Activated B cell treated with CpG ODN at 0.5 μM for 24 hours (primary cell): ENCODE measurements at regions of chr11 and their contacts with region 1.

Region 1: GRCh38 chr11:34357701-34358257 is at the start of gene ABTB2:
- DNase-seq: peak; percentile 94
- ATAC-seq: peak; percentile 87
- H3K4me3 Mint-ChIP-seq: peak within 1 kb of the TSS; percentile 88
- H3K27ac Mint-ChIP-seq: peak within 1 kb of the TSS; percentile 86
- H3K4me1 Mint-ChIP-seq: peaks cover 39% of the 10 kb centered on the region
- H3K27me3 Mint-ChIP-seq: peaks cover 17% of the 10 kb centered on the region
- CTCF ChIP-seq: no peak
- total RNA-seq, gene ABTB2: 68.6 and 73.0 TPM in 2 replicates

Region 2: GRCh38 chr11:33857933-33858371 is 499.8 kb before region 1 on chr11:
- CTCF ChIA-PET with region 1: interaction called, 3 read pairs
- POLR2A ChIA-PET with region 1: no interaction called
- intact Hi-C with region 1: loop called (anchors 1 kb)
- DNase-seq: peak; percentile 65
- ATAC-seq: peak; percentile 98
- H3K4me3 Mint-ChIP-seq: no peak overlapping the region
- H3K27ac Mint-ChIP-seq: no peak overlapping the region
- H3K4me1 Mint-ChIP-seq: peaks cover 8% of the 10 kb centered on the region
- H3K27me3 Mint-ChIP-seq: no peaks in the 10 kb centered on the region
- CTCF ChIP-seq: peak; percentile 39

Region 3: DNA sequence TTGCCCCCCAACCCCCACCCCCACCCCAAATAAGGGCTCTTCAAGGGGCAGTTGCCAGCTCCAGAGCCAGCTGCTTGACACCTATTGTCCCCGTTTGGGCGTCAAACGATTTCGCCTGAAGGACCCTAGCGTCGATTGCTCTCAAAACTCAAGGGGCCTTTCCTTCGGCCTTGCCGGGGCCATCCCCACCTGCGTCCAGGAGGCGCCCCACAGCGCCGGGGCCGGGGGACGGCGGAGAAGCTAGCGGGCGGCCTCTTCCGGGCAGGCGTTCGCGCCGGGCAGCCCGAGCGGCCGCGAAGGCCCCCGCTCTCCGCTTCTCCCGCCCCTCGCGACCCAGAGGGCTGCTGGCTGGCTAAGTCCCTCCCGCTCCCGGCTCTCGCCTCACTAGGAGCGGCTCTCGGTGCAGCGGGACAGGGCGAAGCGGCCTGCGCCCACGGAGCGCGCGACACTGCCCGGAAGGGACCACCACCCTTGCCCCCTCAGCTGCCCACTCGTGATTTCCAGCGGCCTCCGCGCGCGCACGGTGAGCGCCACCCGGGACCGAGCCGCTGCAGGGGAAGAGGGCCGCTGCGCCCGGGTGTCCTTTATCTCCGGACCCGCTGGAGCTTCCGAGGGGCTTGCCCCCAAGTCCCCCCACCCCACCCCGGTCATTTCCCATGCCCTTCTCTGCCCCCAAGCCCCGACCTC is 306.3 kb before region 1 on chr11 and contains the start of gene CAPRIN1:
- CTCF ChIA-PET with region 1: no interaction called
- POLR2A ChIA-PET with region 1: interaction called, 12 read pairs
- intact Hi-C with region 1: loop called (anchors 1 kb)
- DNase-seq: peak; percentile 87
- ATAC-seq: peak; percentile 73
- H3K4me3 Mint-ChIP-seq: peak within 1 kb of the TSS; percentile 99
- H3K27ac Mint-ChIP-seq: peak within 1 kb of the TSS; percentile 98
- H3K4me1 Mint-ChIP-seq: peaks cover 37% of the 10 kb centered on the region
- H3K27me3 Mint-ChIP-seq: no peaks in the 10 kb centered on the region
- CTCF ChIP-seq: no peak
- total RNA-seq, gene CAPRIN1: 152 and 158 TPM in 2 replicates

Region 4: GRCh38 chr11:34180040-34180813 is 177.6 kb before region 1 on chr11:
- CTCF ChIA-PET with region 1: interaction called, 100 read pairs
- POLR2A ChIA-PET with region 1: interaction called, 123 read pairs
- intact Hi-C with region 1: no loop called
- DNase-seq: no peak
- ATAC-seq: no peak
- H3K4me3 Mint-ChIP-seq: no peak overlapping the region
- H3K27ac Mint-ChIP-seq: no peak overlapping the region
- H3K4me1 Mint-ChIP-seq: peaks cover 49% of the 10 kb centered on the region
- H3K27me3 Mint-ChIP-seq: no peaks in the 10 kb centered on the region
- CTCF ChIP-seq: no peak

Region 5: GRCh38 chr11:34250732-34251639 is 106.8 kb before region 1 on chr11:
- CTCF ChIA-PET with region 1: interaction called, 5 read pairs
- POLR2A ChIA-PET with region 1: interaction called, 27 read pairs
- intact Hi-C with region 1: loop called (anchors 1 kb)
- DNase-seq: peak; percentile 63
- ATAC-seq: peak; percentile 98
- H3K4me3 Mint-ChIP-seq: peak overlapping the region; percentile 55
- H3K27ac Mint-ChIP-seq: peak overlapping the region; percentile 71
- H3K4me1 Mint-ChIP-seq: peaks cover 55% of the 10 kb centered on the region
- H3K27me3 Mint-ChIP-seq: no peaks in the 10 kb centered on the region
- CTCF ChIP-seq: no peak

Region 6: GRCh38 chr11:35391922-35392813 is 1034.4 kb after region 1 on chr11:
- CTCF ChIA-PET with region 1: no interaction called
- POLR2A ChIA-PET with region 1: no interaction called
- intact Hi-C with region 1: loop called (anchors 5 kb)
- DNase-seq: peak; percentile 79
- ATAC-seq: peak; percentile 75
- H3K4me3 Mint-ChIP-seq: peak overlapping the region; percentile 47
- H3K27ac Mint-ChIP-seq: no peak overlapping the region
- H3K4me1 Mint-ChIP-seq: peaks cover 25% of the 10 kb centered on the region
- H3K27me3 Mint-ChIP-seq: peaks cover 5% of the 10 kb centered on the region
- CTCF ChIP-seq: peak; percentile 84